PC-3 (cell line): ENCODE measurements at regions of chr1 and their contacts with region 1.

Region 1: DNA sequence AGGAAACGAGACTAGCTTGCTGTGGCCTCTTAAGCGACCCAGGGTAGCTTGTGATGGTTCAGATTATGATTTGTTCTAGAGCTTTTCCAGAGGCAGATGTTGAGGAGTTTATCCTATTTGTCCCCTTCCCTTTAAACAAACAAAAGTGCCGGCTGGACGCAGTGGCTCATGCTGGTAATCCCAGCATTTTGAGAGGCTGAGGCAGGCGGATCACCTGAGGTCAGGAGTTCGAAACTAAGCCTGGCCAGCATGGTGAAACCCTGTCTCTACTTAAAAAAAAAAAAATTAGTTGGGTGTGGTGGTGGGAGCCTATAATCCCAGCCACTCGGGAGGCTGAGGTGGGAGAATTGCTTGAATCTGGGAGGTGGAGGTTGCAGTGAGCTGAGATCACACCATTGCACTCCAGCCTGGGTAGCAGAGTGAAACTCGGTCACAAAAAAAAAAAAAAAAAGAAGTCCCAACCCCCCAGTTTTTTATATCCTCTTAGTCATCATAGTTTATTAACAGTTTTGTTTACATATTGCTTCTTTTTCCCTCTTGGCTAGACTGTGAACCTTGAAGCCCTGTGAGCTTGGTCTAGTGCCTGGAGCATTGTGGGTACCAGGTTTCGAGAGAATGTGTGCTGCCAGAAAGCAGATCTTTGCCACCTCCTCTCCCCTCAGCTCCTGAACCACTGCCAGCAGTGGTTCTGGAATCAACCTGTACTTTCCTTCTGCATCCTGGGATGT is 29.8 kb downstream of the MAPKAPK2 start:
- DNase-seq: peak; percentile 99
- ATAC-seq: peak; percentile 76
- H3K4me3 ChIP-seq: peak overlapping the region; percentile 45
- H3K27ac ChIP-seq: peak overlapping the region; percentile 88
- H3K4me1 ChIP-seq: peaks cover 64% of the 10 kb centered on the region
- H3K27me3 ChIP-seq: no peaks in the 10 kb centered on the region
- CTCF ChIP-seq: no peak

Region 2: DNA sequence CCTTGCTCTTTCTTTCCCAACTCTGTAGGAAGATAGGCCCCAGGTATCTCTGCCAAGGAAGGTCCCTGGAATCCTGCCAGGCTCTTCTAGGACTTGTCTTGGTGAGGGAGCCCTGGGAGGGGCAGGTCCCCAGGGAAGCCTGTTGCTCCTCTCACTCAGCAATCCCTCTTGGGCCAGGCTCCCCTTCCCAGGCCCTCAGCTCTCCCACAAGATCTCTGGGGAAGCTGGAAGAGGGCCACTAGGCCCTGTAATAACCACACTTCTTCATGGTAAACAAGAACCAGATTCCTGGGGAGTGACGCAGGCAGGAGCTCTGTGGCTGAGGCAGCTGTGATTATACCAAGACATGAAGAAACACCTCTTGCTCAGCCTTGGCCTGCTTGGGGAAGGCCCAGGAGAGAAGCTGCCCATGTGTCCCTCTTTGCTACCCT is 39.7 kb before region 1 on chr1:
- CTCF ChIA-PET with region 1: interaction called, 27 read pairs
- POLR2A ChIA-PET with region 1: interaction called, 8 read pairs
- intact Hi-C with region 1: no loop called
- DNase-seq: peak; percentile 100
- ATAC-seq: peak; percentile 99
- H3K4me3 ChIP-seq: no peak overlapping the region
- H3K27ac ChIP-seq: peak overlapping the region; percentile 66
- H3K4me1 ChIP-seq: peaks cover 17% of the 10 kb centered on the region
- H3K27me3 ChIP-seq: no peaks in the 10 kb centered on the region
- CTCF ChIP-seq: no peak